ENCODE measurements at regions of chr2 and their contacts with region 1.

Region 1: DNA sequence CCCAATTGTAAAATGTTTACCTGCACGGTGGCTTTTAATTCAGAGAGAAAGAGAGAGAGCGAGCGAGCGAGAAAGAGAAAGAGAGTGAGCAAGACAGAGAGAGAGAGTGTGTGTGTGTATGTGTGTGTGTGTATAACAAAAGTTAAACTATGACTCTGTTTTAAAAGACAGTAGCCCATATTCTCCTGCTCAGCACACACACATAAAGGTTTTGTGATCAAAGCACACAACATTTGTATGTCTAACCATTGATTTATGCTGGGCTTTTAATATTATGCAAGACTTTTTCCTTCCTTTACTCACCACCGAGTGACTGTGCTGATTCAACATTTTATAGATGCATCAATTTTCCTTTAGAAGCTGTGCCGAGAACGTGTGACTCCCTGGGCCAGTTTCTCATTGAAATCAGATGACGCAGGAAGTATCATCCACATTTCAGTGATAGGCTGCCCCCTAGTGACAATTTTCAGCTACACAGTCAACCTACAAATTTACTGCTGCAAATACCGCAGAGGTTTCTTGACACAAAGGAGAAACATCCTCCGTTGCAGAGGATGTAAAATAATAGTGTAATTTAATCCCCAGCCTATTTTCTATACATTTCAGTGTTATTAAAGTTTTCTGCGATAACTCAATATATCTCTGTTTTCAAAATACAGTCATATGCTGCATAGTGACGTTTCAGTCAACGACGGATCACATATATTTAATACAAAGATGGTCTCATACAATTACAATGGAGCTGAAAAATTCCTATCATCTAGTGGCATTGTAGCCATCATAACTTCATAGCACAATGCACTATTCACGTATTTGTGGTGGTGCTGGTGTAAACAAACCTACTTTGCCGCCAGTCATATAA is 165.9 kb upstream of the TANK start:
- DNase-seq: peak; percentile 28
- ATAC-seq: peak; percentile 90
- H3K4me3 ChIP-seq: no peak overlapping the region
- H3K27ac ChIP-seq: no peak overlapping the region
- H3K4me1 ChIP-seq: no peaks in the 10 kb centered on the region
- H3K27me3 ChIP-seq: no peaks in the 10 kb centered on the region
- CTCF ChIP-seq: peak; percentile 77 to 88 (median 78)
- EP300 ChIP-seq: no peak
- POLR2A ChIP-seq: no peak
- RAD21 ChIP-seq: peak; percentile 87

Region 2: GRCh38 chr2:160087854-160088745 is 906.3 kb before region 1 on chr2:
- CTCF ChIA-PET with region 1: interaction called, 12 read pairs
- POLR2A ChIA-PET with region 1: no interaction called
- RAD21 ChIA-PET with region 1: no interaction called
- SMC1A ChIA-PET with region 1: no interaction called
- in situ Hi-C with region 1: no loop called
- intact Hi-C with region 1: loop called (anchors 2 kb)
- DNase-seq: no peak
- ATAC-seq: peak; percentile 82
- H3K4me3 ChIP-seq: no peak overlapping the region
- H3K27ac ChIP-seq: no peak overlapping the region
- H3K4me1 ChIP-seq: no peaks in the 10 kb centered on the region
- H3K27me3 ChIP-seq: no peaks in the 10 kb centered on the region
- CTCF ChIP-seq: peak; percentile 20 to 30 (median 21); a peak in 3 of 6 replicates
- EP300 ChIP-seq: no peak
- POLR2A ChIP-seq: no peak
- RAD21 ChIP-seq: peak; percentile 59

Region 3: GRCh38 chr2:160252278-160252887 is 742.0 kb before region 1 on chr2:
- CTCF ChIA-PET with region 1: interaction called, 15 read pairs
- POLR2A ChIA-PET with region 1: no interaction called
- RAD21 ChIA-PET with region 1: interaction called, 5 read pairs
- SMC1A ChIA-PET with region 1: interaction called, 4 read pairs
- in situ Hi-C with region 1: no loop called
- intact Hi-C with region 1: loop called (anchors 5 kb)
- DNase-seq: no peak
- ATAC-seq: no peak
- H3K4me3 ChIP-seq: no peak overlapping the region
- H3K27ac ChIP-seq: no peak overlapping the region
- H3K4me1 ChIP-seq: no peaks in the 10 kb centered on the region
- H3K27me3 ChIP-seq: no peaks in the 10 kb centered on the region; a peak in 3 of 4 replicates
- CTCF ChIP-seq: peak; percentile 55 to 64 (median 63)
- EP300 ChIP-seq: no peak
- POLR2A ChIP-seq: no peak
- RAD21 ChIP-seq: peak; percentile 44

Region 4: GRCh38 chr2:160429248-160430000 is 564.9 kb before region 1 on chr2:
- CTCF ChIA-PET with region 1: interaction called, 44 read pairs
- POLR2A ChIA-PET with region 1: no interaction called
- RAD21 ChIA-PET with region 1: interaction called, 14 read pairs
- SMC1A ChIA-PET with region 1: interaction called, 3 read pairs
- in situ Hi-C with region 1: no loop called
- intact Hi-C with region 1: loop called (anchors 5 kb)
- DNase-seq: no peak
- ATAC-seq: peak; percentile 71
- H3K4me3 ChIP-seq: no peak overlapping the region
- H3K27ac ChIP-seq: no peak overlapping the region
- H3K4me1 ChIP-seq: no peaks in the 10 kb centered on the region; the same call in 1 of the 2 replicates
- H3K27me3 ChIP-seq: no peaks in the 10 kb centered on the region
- CTCF ChIP-seq: peak; percentile 31 to 47 (median 41); a peak in 5 of 6 replicates
- EP300 ChIP-seq: no peak
- POLR2A ChIP-seq: no peak
- RAD21 ChIP-seq: no peak

Region 5: GRCh38 chr2:160963957-160964356 is 30.4 kb before region 1 on chr2:
- CTCF ChIA-PET with region 1: interaction called, 20 read pairs
- POLR2A ChIA-PET with region 1: no interaction called
- RAD21 ChIA-PET with region 1: interaction called, 6 read pairs
- SMC1A ChIA-PET with region 1: interaction called, 3 read pairs
- in situ Hi-C with region 1: no loop called
- intact Hi-C with region 1: no loop called
- DNase-seq: no peak
- ATAC-seq: no peak
- H3K4me3 ChIP-seq: no peak overlapping the region
- H3K27ac ChIP-seq: no peak overlapping the region
- H3K4me1 ChIP-seq: no peaks in the 10 kb centered on the region
- H3K27me3 ChIP-seq: peaks cover 0 to 2% of the 10 kb centered on the region in 2 experiments; a peak in 1 of 4 replicates
- CTCF ChIP-seq: no peak
- EP300 ChIP-seq: no peak
- POLR2A ChIP-seq: no peak
- RAD21 ChIP-seq: no peak

Region 6: DNA sequence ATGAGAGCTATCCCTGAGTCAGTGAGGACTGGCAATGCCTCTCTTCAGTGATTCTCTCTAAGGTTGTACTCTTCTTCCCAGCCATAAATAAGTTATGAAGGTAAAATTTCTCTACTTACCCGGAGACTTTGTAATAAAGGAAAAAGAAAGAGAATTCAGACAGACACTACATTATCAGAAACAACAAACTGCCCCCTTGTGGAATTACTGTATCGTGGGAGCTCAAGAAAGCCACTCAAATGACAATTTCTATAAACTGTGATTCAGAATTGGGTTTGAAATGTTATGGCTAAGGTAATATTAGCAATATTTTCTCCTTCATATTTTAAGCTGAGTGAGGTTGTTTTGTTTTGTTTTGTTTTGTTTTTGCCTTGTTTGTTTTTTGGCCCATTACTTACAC is 10.0 kb after region 1 on chr2:
- CTCF ChIA-PET with region 1: interaction called, 24 read pairs
- POLR2A ChIA-PET with region 1: no interaction called
- RAD21 ChIA-PET with region 1: interaction called, 7 read pairs
- SMC1A ChIA-PET with region 1: interaction called, 6 read pairs
- in situ Hi-C with region 1: no loop called
- intact Hi-C with region 1: no loop called
- DNase-seq: no peak
- ATAC-seq: no peak; the same call in 2 of the 3 replicates
- H3K4me3 ChIP-seq: no peak overlapping the region
- H3K27ac ChIP-seq: no peak overlapping the region
- H3K4me1 ChIP-seq: no peaks in the 10 kb centered on the region
- H3K27me3 ChIP-seq: no peaks in the 10 kb centered on the region
- CTCF ChIP-seq: peak in 2 of 3 experiments; percentile 18 to 19; a peak in 3 of 6 replicates
- EP300 ChIP-seq: no peak
- POLR2A ChIP-seq: no peak
- RAD21 ChIP-seq: 0 out of 2 replicates have a peak, but pooled peaks have one; percentile 7

Region 7: DNA sequence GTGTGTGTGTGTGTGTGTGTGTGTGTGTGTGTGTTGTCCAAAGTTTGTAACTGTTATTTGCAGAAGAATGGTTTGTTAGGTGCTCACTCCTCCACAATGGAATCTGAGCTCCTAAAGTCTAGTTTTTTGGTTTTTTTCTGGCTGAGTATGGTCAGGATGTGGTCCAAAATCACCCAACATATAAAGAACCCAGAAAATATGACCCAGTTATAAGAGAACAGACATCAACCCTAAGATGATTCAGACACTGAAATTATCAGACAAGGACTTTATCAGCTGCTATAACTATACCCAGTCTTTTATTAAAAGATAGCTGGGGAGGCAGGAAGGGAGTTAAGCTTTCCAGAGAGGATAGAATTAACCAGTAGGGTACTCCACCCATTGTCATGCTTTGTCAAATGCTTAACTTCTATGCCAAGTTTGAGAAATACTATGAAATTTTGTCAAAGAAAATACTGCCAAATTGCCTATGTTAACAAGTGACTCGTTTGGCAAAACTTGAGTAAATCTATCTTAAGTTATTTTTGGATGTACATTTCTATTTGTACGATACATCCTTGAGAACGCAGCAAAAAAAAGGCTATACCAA is 223.3 kb after region 1 on chr2:
- CTCF ChIA-PET with region 1: no interaction called
- POLR2A ChIA-PET with region 1: no interaction called
- RAD21 ChIA-PET with region 1: no interaction called
- SMC1A ChIA-PET with region 1: no interaction called
- in situ Hi-C with region 1: no loop called
- intact Hi-C with region 1: no loop called
- DNase-seq: no peak
- ATAC-seq: no peak
- H3K4me3 ChIP-seq: no peak overlapping the region
- H3K27ac ChIP-seq: no peak overlapping the region
- H3K4me1 ChIP-seq: no peaks in the 10 kb centered on the region
- H3K27me3 ChIP-seq: no peaks in the 10 kb centered on the region
- CTCF ChIP-seq: no peak
- EP300 ChIP-seq: no peak
- POLR2A ChIP-seq: no peak
- RAD21 ChIP-seq: no peak

Measured in GM12878 (cell line).